ENCODE measurements at regions of chr7 and their contacts with region 1.

Region 1: GRCh38 chr7:47901542-47901941 is 46.7 kb downstream of the PKD1L1 start:
- DNase-seq: peak; percentile 44 to 90
- H3K4me3 ChIP-seq: peak overlapping the region; percentile 34; the same call in 1 of the 2 replicates
- H3K27ac ChIP-seq: peak overlapping the region; percentile 91
- H3K4me1 ChIP-seq: peaks cover 26% of the 10 kb centered on the region
- H3K27me3 ChIP-seq: no peaks in the 10 kb centered on the region
- CTCF ChIP-seq: no peak

Region 2: DNA sequence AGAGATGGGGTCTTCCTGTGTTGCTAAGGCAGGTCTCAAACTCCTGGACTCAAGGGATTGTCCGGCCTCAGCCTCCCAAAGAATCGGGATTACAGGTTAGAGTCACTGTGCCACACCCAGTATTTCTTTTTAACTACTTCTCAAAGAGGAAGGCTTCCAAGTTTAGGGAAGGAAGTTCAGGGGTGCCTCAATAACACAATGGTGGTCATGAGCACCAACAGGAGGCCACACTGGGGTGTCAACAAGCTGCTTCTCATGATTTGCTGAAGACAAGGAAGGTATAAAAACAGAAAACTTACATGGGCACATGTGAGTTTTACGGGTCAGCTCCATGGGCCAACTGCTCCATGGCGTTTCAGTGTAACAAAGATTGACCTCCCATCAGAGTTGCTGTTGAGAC is 480.1 kb before region 1 on chr7:
- CTCF ChIA-PET with region 1: no interaction called
- POLR2A ChIA-PET with region 1: interaction called, 19 read pairs
- intact Hi-C with region 1: no loop called
- DNase-seq: no peak
- H3K4me3 ChIP-seq: no peak overlapping the region
- H3K27ac ChIP-seq: no peak overlapping the region
- H3K4me1 ChIP-seq: no peaks in the 10 kb centered on the region
- H3K27me3 ChIP-seq: no peaks in the 10 kb centered on the region
- CTCF ChIP-seq: no peak

Region 3: GRCh38 chr7:47954231-47954911 is 52.8 kb after region 1 on chr7:
- CTCF ChIA-PET with region 1: no interaction called
- POLR2A ChIA-PET with region 1: no interaction called
- intact Hi-C with region 1: no loop called
- DNase-seq: no peak
- H3K4me3 ChIP-seq: no peak overlapping the region
- H3K27ac ChIP-seq: no peak overlapping the region
- H3K4me1 ChIP-seq: peaks cover 26% of the 10 kb centered on the region
- H3K27me3 ChIP-seq: no peaks in the 10 kb centered on the region
- CTCF ChIP-seq: no peak

Region 4: GRCh38 chr7:49264530-49264929 is 1363.0 kb after region 1 on chr7:
- CTCF ChIA-PET with region 1: no interaction called
- POLR2A ChIA-PET with region 1: interaction called, 12 read pairs
- intact Hi-C with region 1: no loop called
- DNase-seq: peak in 1 of 2 experiments; percentile 17
- H3K4me3 ChIP-seq: no peak overlapping the region
- H3K27ac ChIP-seq: no peak overlapping the region
- H3K4me1 ChIP-seq: no peaks in the 10 kb centered on the region
- H3K27me3 ChIP-seq: peaks cover 26% of the 10 kb centered on the region; the same call in 1 of the 2 replicates
- CTCF ChIP-seq: no peak

Measured in PC-9 (cell line).